ENCODE measurements at regions of chr15 and their contacts with region 1.

Region 1: DNA sequence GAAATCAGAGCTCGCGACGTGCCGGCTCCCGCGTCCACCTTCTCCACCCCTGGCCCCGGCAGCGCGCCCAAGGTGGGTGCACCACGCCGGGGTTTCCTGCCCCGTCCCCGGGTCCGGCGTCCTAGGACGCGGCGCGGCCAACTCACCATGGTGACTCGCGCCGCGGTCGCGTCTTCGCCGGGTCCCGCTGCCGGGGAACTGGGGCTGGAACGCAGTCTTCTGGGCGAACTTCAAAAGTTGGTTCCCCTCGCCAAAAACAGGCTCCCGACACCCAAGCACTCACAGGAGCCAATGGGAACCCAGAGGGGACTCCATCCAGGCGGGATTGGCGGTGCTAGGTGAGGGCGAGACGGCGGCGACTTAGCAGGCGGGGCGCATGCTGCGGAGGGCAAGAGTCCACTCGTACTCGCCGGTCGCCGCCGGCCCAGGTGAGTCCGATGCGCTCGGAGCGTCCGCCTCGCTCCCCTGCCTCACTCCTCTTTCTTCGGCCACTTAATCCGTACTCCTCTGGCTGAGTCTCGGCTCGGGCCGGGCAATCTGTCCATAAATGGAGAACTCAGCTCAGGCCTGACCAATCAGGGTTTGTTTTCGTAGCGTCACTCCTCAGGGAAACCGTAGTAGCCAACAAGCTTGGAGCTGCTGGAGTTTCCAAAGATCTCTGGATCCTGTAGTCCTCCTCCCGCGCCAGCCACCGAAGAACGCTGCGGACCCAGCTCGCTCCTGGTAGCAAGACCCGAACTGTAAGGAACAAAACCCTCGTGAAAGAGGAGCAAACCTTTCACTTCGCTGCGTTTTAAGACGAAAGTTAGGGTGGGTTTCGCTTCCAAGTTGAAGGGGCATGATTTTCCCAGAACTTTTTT is at the start of gene MYO1E:
- DNase-seq: peak; percentile 95
- H3K4me3 Mint-ChIP-seq: peak within 1 kb of the TSS; percentile 82
- H3K27ac Mint-ChIP-seq: peak within 1 kb of the TSS; percentile 96
- H3K4me1 Mint-ChIP-seq: peaks cover 42% of the 10 kb centered on the region
- H3K27me3 Mint-ChIP-seq: no peaks in the 10 kb centered on the region
- CTCF ChIP-seq: no peak
- total RNA-seq, gene MYO1E: 617 and 655 TPM in 2 replicates

Region 2: DNA sequence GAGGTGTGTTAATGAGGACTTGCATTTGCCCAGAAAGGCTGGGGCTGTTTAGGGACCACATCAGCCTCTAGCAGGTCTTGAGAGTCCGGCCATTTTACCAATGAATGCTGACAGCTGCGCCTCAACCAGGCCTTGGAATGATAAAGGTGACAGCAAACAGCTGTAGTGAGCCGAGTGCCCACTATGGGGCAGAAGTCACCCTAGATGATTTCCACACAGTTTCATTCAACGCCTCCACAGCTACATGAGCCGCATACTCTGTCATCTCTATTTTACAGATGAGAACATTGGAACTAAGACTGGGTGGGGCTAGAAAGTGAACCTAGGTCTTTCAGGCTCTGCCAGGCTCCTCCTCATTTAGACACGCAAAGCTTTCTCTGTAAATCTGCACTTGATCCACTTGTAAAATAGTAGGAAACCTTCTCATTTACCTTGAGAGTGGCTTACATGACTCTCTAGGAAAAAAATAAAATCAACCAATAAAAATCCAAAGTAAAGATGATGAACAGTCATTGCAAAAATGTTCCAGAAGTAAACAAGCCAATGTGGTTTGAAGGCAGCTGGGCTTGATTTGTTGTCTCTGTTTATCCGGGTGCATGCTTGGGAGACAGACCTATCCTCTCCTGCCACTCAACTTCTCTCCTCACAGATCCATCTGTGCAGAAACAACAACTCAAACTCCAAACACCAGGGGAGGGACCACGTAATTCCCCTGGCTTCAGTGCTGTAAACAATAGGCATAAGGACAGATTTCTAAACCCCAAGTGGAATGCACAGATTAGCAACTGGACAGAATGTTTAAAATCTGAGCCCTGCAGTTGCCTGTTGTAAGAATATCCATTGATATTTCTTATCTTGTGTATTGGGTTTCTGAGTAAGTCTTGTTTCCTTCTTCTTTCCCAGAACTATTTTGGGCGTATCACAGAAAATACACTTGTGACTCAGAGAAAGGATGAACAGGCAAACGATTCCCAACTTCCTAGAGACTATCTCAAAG is 197.4 kb before region 1 on chr15:
- CTCF ChIA-PET with region 1: interaction called, 3 read pairs
- intact Hi-C with region 1: loop called (anchors 10 kb)
- DNase-seq: peak; percentile 57
- H3K4me3 Mint-ChIP-seq: no peak overlapping the region
- H3K27ac Mint-ChIP-seq: peak overlapping the region; percentile 24
- H3K4me1 Mint-ChIP-seq: peaks cover 14% of the 10 kb centered on the region
- H3K27me3 Mint-ChIP-seq: no peaks in the 10 kb centered on the region
- CTCF ChIP-seq: peak; percentile 68

Region 3: DNA sequence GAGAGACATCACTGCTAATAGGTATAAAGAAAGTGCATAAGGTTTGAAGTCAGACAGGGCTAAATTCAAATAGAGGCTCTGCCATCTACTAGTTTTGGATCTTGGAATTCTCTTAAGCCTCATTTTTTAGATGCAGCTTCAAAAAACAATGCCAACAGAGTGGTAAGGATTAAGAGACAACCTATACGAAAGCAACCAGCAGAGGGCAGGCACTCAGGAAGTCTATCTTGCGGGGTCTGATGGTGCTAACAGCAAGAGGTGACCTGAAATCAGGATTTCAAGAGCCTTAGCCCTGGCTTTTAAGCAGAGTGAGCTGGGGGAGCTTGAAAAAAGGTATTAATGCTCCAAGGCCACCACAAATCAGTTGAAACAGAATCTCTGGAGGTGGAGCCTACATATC is 125.2 kb before region 1 on chr15:
- CTCF ChIA-PET with region 1: interaction called, 4 read pairs
- intact Hi-C with region 1: loop called (anchors 5 kb)
- DNase-seq: peak; percentile 69
- H3K4me3 Mint-ChIP-seq: no peak overlapping the region
- H3K27ac Mint-ChIP-seq: peak overlapping the region; percentile 69
- H3K4me1 Mint-ChIP-seq: peaks cover 88% of the 10 kb centered on the region
- H3K27me3 Mint-ChIP-seq: no peaks in the 10 kb centered on the region
- CTCF ChIP-seq: peak; percentile 44

Region 4: DNA sequence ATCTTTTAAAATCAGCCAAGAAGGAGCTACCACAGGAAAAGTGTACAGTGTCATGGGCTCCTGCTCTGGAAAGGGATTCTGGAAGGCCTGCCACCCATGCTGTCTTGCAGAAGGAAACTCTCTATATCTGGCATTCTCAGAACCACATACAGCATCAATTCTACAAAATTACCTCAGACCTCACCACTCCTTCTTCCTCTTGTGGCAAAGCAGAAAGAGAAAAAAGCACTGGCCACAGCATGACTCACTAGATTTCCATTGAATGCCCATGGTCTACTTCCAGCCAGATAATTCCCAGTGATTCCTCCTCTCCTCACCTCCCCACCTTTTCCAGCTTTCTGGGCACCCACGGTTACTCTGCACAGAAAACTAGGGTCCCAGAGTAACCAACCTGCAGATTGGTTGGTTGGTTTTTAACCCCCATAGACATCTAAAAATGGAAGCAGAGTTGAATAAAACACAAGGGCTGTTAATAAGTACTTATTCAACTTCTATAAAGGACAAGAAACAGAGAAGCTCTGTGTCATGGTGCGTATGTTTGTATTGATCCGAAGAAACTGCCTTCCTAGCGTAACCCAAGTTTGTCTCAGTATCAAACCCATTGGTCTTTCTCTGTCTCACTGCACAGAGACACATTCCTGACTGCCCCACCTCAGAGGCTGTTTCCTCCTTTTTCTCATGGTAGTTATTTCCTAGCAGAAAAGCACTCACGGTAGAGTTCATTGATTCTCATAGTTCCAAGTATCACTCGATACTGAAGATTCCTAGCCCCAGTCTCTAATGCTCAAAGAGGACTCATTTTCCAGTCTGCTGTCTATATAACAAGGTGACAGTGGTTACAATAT is 98.2 kb before region 1 on chr15:
- CTCF ChIA-PET with region 1: interaction called, 3 read pairs
- intact Hi-C with region 1: loop called (anchors 5 kb)
- DNase-seq: peak; percentile 77
- H3K4me3 Mint-ChIP-seq: peak overlapping the region; percentile 60
- H3K27ac Mint-ChIP-seq: peak overlapping the region; percentile 100
- H3K4me1 Mint-ChIP-seq: peaks cover 86% of the 10 kb centered on the region
- H3K27me3 Mint-ChIP-seq: no peaks in the 10 kb centered on the region
- CTCF ChIP-seq: no peak

Region 5: DNA sequence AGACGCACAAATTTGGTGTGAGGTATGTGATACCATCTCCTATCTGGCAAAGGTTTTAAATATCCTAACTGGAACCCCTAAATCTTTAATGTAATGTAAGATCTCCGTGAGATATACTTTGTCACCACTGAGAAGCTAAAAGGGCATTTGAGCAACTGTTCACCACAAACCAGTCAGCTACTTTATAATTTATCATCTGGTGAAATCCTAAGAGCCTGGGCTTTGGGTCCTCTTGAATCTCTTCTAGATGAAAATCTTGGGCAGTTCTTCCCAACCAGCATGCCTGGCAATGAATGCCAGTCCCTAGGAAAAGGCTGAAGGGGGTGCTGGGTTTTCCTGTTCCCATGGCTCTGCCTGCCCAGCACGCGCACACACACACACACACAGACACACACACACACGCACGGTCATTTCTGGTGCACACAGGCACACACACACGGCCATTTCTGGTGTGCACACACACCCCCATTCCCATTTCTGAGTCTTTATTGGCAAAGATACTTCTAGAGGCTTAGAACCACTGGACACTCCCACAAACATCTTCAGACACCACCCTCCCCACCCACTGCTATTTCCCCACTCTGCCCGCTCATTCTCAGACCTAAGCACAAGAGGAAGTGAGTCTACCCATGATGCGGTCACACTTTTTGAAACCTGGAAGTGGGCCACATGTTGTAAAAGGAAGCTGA is 72.5 kb before region 1 on chr15:
- CTCF ChIA-PET with region 1: interaction called, 5 read pairs
- intact Hi-C with region 1: loop called (anchors 2 kb)
- DNase-seq: peak; percentile 83
- H3K4me3 Mint-ChIP-seq: peak overlapping the region; percentile 45
- H3K27ac Mint-ChIP-seq: peak overlapping the region; percentile 92
- H3K4me1 Mint-ChIP-seq: peaks cover 85% of the 10 kb centered on the region
- H3K27me3 Mint-ChIP-seq: no peaks in the 10 kb centered on the region
- CTCF ChIP-seq: no peak

Region 6: GRCh38 chr15:59410391-59410896 is 37.9 kb after region 1 on chr15:
- CTCF ChIA-PET with region 1: interaction called, 6 read pairs
- intact Hi-C with region 1: loop called (anchors 2 kb)
- DNase-seq: peak; percentile 73
- H3K4me3 Mint-ChIP-seq: peak overlapping the region; percentile 53
- H3K27ac Mint-ChIP-seq: peak overlapping the region; percentile 71
- H3K4me1 Mint-ChIP-seq: peaks cover 56% of the 10 kb centered on the region
- H3K27me3 Mint-ChIP-seq: no peaks in the 10 kb centered on the region
- CTCF ChIP-seq: no peak

Region 7: DNA sequence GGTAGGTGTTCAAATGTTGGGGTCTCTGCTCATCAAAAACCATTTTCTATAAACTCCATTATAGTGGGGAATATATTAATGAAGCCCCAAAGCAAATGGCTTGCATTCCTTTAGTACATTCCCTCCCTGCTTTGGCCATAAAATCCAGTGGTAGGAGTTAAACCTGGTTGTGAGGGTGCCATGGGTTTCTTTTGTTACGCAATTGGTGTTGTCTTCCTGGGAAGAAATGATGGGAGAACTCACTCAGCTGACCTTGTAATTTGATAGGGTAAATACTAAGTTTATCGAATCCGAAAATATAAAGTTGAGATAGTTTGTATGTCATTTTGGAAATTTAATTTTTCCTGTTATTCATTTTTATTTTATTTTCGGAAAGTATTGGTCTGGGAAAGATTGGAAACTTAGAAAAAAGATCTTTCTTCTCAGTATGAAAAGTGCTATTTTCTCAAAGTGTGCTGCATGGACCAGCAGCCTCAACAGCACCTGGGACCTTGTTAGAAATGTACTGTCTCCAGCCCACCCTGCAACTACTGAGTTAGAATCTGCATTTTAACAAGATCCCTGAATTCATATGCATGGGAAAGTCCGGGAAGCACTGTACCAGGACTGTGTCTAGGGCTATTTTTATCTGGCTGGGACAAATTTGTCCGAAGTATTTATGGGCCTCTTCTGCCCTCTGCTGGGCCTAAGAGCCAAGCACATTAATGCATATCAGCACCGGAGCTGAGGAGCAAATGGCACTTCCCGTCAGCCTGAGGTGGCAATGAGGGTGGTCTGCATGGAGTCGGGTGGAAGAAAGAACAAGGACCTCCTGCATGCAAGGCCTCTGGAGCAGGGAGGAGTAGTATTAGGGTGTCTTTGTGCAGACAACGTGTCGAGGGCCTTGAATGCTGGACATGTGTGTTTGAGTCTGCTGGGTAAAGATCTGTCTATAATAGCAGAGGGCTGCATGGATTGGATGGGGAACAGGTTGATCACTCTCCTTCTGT is 120.1 kb after region 1 on chr15:
- CTCF ChIA-PET with region 1: interaction called, 7 read pairs
- intact Hi-C with region 1: loop called (anchors 1 kb)
- DNase-seq: peak; percentile 70
- H3K4me3 Mint-ChIP-seq: no peak overlapping the region
- H3K27ac Mint-ChIP-seq: no peak overlapping the region
- H3K4me1 Mint-ChIP-seq: peaks cover 11% of the 10 kb centered on the region
- H3K27me3 Mint-ChIP-seq: no peaks in the 10 kb centered on the region
- CTCF ChIP-seq: peak; percentile 79

Measured in Calu3 (cell line).